CD8-positive, alpha-beta T cell (primary cell): ENCODE measurements at regions of chr4 and their contacts with region 1.

Region 1: GRCh38 chr4:8221476-8221875 is 22.4 kb downstream of the SH3TC1 start:
- DNase-seq: peak in 3 of 9 experiments; percentile 52 to 70 (median 66)
- ATAC-seq: peak; percentile 71
- H3K4me3 ChIP-seq: no peak overlapping the region
- H3K4me3 Mint-ChIP-seq: peak overlapping the region; percentile 2
- H3K27ac ChIP-seq: no peak overlapping the region
- H3K27ac Mint-ChIP-seq: peak overlapping the region; percentile 91
- H3K4me1 ChIP-seq: peaks cover 39% of the 10 kb centered on the region
- H3K4me1 Mint-ChIP-seq: peaks cover 55% of the 10 kb centered on the region
- H3K27me3 ChIP-seq: peaks cover 0 to under 1% of the 10 kb centered on the region in 2 experiments
- H3K27me3 Mint-ChIP-seq: no peaks in the 10 kb centered on the region
- CTCF ChIP-seq: no peak

Region 2: GRCh38 chr4:8198906-8199593 is 22.4 kb before region 1 on chr4 and contains the start of gene SH3TC1:
- CTCF ChIA-PET with region 1: interaction called, 3 read pairs
- POLR2A ChIA-PET with region 1: interaction called, 22 read pairs
- intact Hi-C with region 1: loop called (anchors 1 to 2 kb)
- DNase-seq: peak; percentile 19 to 83 (median 59)
- ATAC-seq: peak; percentile 52
- H3K4me3 ChIP-seq: peak within 1 kb of the TSS; percentile 63 to 69
- H3K4me3 Mint-ChIP-seq: peak within 1 kb of the TSS; percentile 97
- H3K27ac ChIP-seq: peak within 1 kb of the TSS; percentile 43 to 61
- H3K27ac Mint-ChIP-seq: peak within 1 kb of the TSS; percentile 97
- H3K4me1 ChIP-seq: peaks cover 47% of the 10 kb centered on the region
- H3K4me1 Mint-ChIP-seq: peaks cover 45% of the 10 kb centered on the region
- H3K27me3 ChIP-seq: no peaks in the 10 kb centered on the region
- H3K27me3 Mint-ChIP-seq: no peaks in the 10 kb centered on the region
- CTCF ChIP-seq: no peak
- total RNA-seq, gene SH3TC1: 90.7 to 102 TPM